ENCODE measurements at regions of chr6 and their contacts with region 1.

Region 1: DNA sequence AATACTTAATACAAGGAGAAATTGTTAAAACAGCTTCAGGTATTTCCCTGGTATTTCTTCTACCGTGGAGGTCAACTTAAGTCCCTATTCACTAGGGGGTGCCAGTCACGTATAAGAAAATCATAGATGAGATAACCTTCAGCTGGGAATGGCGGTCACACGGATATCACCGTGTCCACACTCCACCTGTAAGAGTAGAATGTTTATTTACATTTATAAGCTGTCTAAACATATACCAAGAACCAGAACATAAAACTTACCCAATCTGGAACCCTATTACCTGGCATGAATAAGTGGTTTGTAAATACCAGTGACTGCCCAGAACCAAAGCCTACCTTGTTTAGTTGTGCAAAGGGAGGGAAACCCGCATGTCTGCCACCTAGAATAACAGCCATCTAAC is 1.9 kb upstream of the ELOVL4 start:
- DNase-seq: no peak
- H3K4me3 ChIP-seq: no peak overlapping the region
- H3K27ac ChIP-seq: no peak overlapping the region
- H3K4me1 ChIP-seq: peaks cover 0 to 22% (median 6%) of the 10 kb centered on the region in 4 donors
- H3K27me3 ChIP-seq: no peaks in the 10 kb centered on the region
- CTCF ChIP-seq: peak; percentile 10 to 16

Region 2: GRCh38 chr6:80004173-80005072 is 55.2 kb after region 1 on chr6 and contains the start of gene TTK:
- intact Hi-C with region 1: loop called (anchors 5 kb)
- DNase-seq: peak; percentile 87 to 96
- H3K4me3 ChIP-seq: peak within 1 kb of the TSS; percentile 64 to 66
- H3K27ac ChIP-seq: peak within 1 kb of the TSS; percentile 85 to 90
- H3K4me1 ChIP-seq: peaks cover 0 to 7% (median 6%) of the 10 kb centered on the region in 4 donors
- H3K27me3 ChIP-seq: no peaks in the 10 kb centered on the region
- CTCF ChIP-seq: no peak

Region 3: GRCh38 chr6:80088637-80089036 is 139.4 kb after region 1 on chr6:
- intact Hi-C with region 1: loop called (anchors 10 kb)
- DNase-seq: no peak
- H3K4me3 ChIP-seq: no peak overlapping the region
- H3K27ac ChIP-seq: no peak overlapping the region
- H3K4me1 ChIP-seq: no peaks in the 10 kb centered on the region
- H3K27me3 ChIP-seq: no peaks in the 10 kb centered on the region
- CTCF ChIP-seq: no peak